HCT116 (cell line): ENCODE measurements at regions of chr20 and their contacts with region 1.

Region 1: GRCh38 chr20:57514273-57514751 is 10.6 kb downstream of the CTCFL start:
- DNase-seq: peak; percentile 58
- ATAC-seq: peak; percentile 65
- H3K4me3 ChIP-seq: no peak overlapping the region
- H3K27ac ChIP-seq: no peak overlapping the region
- H3K4me1 ChIP-seq: peaks cover 0 to 4% of the 10 kb centered on the region in 2 experiments; a peak in 1 of 4 replicates
- H3K27me3 ChIP-seq: 0 out of 2 replicates have a peak, but pooled peaks cover 8% of the 10 kb centered on the region
- CTCF ChIP-seq: peak; percentile 66 to 92 (median 81)
- POLR2A ChIP-seq: no peak
- RAD21 ChIP-seq: peak; percentile 91

Region 2: DNA sequence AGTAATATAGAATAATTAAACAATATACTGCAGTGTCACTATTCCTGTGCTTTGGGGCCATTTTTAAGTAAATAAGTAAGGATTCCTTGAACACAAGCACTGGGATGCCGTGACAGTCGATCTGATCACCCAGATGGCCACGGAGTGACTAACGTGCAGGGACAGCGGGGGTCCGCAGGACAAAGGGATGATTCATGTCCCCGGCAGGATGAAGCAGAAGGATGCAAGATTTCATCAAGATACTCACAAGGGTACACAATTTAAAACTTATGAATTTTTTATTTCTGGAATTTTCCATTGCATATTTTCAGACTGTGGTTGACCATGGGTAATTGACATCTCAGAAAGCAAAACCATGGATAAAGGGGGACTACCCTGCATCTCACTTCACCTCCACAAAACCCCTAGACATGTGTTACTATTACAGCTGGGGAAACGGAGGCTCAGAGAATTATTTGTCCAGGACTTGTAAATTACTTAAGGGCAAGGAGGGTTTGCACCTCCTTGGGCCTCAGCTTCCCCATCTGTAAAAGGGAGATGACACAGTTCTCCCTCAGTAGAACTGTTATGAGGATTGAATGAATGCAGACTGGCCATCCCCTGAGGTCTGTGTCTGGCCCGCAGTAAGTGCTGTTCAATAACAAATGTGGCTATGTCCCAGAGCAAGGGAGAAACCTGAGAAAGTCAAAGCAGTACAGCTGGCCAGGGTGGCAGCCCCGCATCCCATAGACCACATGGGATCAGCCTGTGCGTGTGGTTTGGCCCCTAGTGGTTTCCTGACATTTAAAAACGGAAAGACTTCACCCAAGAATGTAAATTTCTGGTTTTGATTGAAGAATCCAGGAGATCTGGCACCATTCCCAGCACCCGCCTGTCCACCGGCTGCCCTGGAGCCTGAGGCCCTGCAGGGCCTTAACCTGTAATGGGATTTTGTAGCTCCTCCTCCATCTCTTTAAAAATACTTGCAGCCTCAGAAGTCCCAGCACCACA is 483.4 kb before region 1 on chr20:
- CTCF ChIA-PET with region 1: no interaction called
- POLR2A ChIA-PET with region 1: no interaction called
- RAD21 ChIA-PET with region 1: no interaction called
- intact Hi-C with region 1: no loop called
- DNase-seq: no peak
- ATAC-seq: peak; percentile 36
- H3K4me3 ChIP-seq: no peak overlapping the region
- H3K27ac ChIP-seq: no peak overlapping the region
- H3K4me1 ChIP-seq: peaks cover 6 to 7% of the 10 kb centered on the region in 2 experiments; a peak in 1 of 4 replicates
- H3K27me3 ChIP-seq: peaks cover 15% of the 10 kb centered on the region; the same call in 1 of the 2 replicates
- CTCF ChIP-seq: no peak
- POLR2A ChIP-seq: no peak
- RAD21 ChIP-seq: no peak

Region 3: DNA sequence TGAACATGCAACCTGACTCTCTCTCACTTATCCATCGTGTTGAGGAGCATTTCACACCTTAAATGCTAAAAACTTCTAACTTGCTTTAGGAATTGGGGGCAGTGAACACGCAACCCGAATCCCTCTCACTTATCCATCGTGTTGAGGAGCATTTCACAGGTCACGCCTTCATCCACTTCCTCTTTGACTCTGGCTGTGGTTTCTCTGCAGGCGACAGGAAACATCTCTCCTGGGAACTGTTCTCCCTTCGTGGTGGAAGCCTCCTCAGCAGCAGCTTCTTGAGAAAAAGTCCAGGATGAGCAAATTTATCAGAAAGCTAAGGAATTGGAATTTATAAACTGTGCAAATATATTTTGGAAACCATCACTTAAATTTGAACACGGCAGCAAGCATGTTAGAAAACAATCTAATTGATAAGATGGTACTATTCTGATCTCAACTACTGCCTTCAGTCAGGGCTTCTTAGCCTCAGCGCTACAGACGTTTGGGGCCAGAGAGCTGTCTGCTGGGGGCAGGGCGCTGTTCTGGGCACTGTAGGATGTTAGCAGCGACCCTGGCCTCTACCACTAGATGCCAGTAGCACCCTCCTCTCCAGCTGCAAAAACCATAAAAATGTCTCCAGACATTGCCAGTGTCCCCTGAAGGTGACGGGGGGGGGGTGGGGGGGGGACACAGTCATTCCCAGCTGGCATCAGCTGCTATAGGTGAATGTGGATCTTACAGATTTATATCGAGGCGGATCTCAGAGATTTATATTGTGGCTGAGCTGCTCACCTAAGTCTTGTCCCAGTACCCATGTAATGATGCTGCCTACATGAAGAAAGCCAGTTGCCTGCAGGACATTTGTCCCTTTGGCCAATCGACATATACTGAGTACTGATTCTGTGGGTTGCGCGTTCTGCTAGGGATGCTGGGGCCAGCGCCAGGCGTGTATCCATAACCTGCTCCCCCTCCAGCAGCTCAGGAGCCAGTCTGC is 15.6 kb before region 1 on chr20:
- CTCF ChIA-PET with region 1: interaction called, 24 read pairs
- POLR2A ChIA-PET with region 1: interaction called, 3 read pairs
- RAD21 ChIA-PET with region 1: interaction called in 1 of 2 experiments, 3 read pairs
- intact Hi-C with region 1: no loop called
- DNase-seq: peak; percentile 19
- ATAC-seq: peak; percentile 88
- H3K4me3 ChIP-seq: no peak overlapping the region
- H3K27ac ChIP-seq: no peak overlapping the region
- H3K4me1 ChIP-seq: peaks cover 7 to 14% of the 10 kb centered on the region in 2 experiments; a peak in 3 of 4 replicates
- H3K27me3 ChIP-seq: no peaks in the 10 kb centered on the region
- CTCF ChIP-seq: peak; percentile 45 to 61 (median 51)
- POLR2A ChIP-seq: no peak
- RAD21 ChIP-seq: peak; percentile 55

Region 4: GRCh38 chr20:58209652-58210397 is 695.5 kb after region 1 on chr20:
- CTCF ChIA-PET with region 1: no interaction called
- POLR2A ChIA-PET with region 1: no interaction called
- RAD21 ChIA-PET with region 1: no interaction called
- intact Hi-C with region 1: loop called (anchors 1 kb)
- DNase-seq: peak; percentile 52
- ATAC-seq: peak; percentile 93
- H3K4me3 ChIP-seq: no peak overlapping the region
- H3K27ac ChIP-seq: no peak overlapping the region
- H3K4me1 ChIP-seq: no peaks in the 10 kb centered on the region
- H3K27me3 ChIP-seq: no peaks in the 10 kb centered on the region
- CTCF ChIP-seq: peak; percentile 100
- POLR2A ChIP-seq: no peak
- RAD21 ChIP-seq: peak; percentile 99